GM12878 (cell line): ENCODE measurements at regions of chr14 and their contacts with region 1.

Region 1: DNA sequence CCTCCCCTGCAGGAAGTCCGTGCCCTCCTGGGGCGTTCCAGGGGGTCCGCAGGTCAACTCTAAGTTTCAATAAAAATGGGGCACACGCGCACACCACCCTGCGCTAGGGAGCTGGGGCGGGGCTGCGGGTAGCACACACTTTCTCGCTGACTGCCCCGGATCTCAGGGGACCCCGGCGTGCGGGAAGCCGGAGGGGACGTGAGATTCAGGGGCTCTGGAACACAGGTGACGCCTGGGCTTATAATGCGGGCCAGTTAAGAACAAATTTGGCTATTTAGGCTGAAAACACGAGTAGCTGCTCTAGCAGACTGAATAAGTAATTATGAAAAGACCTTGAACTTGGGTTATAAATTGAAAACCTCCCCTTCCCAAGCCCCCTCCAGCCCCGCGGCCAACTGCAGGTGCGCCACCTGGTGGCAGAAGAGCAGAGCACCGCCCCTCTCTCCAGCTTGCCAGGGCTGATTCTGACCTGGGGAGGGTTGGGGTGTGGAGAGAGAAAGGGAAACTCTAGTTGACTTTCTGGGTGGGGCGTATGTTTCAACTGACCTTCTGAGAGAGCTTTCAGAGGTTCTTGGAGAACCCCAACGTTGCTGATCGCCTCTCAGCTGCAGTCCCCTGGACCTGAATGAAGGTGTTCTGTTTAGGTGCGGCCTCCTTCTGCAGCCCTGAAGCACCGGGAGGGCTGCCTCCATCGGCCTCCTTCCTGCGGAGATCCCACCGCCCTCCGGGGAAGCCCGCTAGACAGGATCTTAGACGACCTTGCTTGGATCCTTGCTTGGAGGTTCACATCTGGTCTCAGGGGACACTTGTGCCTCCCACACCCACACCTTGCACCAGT is 118.4 kb upstream of the EVL start:
- DNase-seq: no peak
- ATAC-seq: peak; percentile 90
- H3K4me3 ChIP-seq: 0 out of 2 replicates have a peak overlapping the region, but pooled peaks have one; percentile 22
- H3K27ac ChIP-seq: no peak overlapping the region
- H3K4me1 ChIP-seq: peaks cover 8% of the 10 kb centered on the region
- H3K27me3 ChIP-seq: peaks cover 0 to 4% of the 10 kb centered on the region in 2 experiments; a peak in 3 of 4 replicates
- CTCF ChIP-seq: peak; percentile 84 to 89 (median 85)
- EP300 ChIP-seq: no peak
- POLR2A ChIP-seq: no peak
- RAD21 ChIP-seq: peak; percentile 60

Region 2: DNA sequence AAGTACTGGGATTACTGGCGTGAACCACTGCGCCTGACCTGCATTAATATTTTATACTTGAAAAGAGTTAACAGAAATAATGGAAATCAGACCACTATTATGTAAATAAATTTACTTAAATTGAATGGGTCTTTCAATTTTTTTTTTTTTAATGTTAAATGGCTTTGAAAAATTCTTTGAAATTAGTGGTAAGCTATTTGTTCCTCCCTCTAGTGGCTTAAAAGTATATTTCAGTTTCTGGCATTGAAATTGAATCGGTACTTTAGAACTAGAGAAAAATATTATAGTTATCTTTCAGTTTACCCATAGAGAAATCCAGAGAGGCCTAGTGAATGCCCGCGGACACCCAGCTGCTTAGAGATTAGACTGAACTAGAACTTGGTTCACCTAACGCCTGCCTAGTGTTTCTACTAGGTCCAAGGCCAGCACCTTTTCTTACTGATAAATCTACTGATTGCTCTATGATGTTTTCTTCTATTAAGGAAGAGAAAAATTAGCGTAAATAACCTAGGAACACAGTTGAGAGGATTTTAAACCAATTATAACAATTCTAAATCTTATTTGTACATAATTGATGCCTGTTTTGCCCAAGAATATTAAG is 47.2 kb before region 1 on chr14:
- CTCF ChIA-PET with region 1: interaction called, 11 read pairs
- POLR2A ChIA-PET with region 1: interaction called, 4 read pairs
- RAD21 ChIA-PET with region 1: interaction called, 3 read pairs
- SMC1A ChIA-PET with region 1: interaction called, 7 read pairs
- in situ Hi-C with region 1: no loop called
- intact Hi-C with region 1: loop called (anchors 5 kb)
- DNase-seq: no peak
- ATAC-seq: peak; percentile 53
- H3K4me3 ChIP-seq: no peak overlapping the region
- H3K27ac ChIP-seq: no peak overlapping the region
- H3K4me1 ChIP-seq: no peaks in the 10 kb centered on the region
- H3K27me3 ChIP-seq: no peaks in the 10 kb centered on the region; a peak in 1 of 4 replicates
- CTCF ChIP-seq: peak in 1 of 3 experiments; percentile 48; a peak in 2 of 6 replicates
- EP300 ChIP-seq: no peak
- POLR2A ChIP-seq: no peak
- RAD21 ChIP-seq: no peak

Region 3: DNA sequence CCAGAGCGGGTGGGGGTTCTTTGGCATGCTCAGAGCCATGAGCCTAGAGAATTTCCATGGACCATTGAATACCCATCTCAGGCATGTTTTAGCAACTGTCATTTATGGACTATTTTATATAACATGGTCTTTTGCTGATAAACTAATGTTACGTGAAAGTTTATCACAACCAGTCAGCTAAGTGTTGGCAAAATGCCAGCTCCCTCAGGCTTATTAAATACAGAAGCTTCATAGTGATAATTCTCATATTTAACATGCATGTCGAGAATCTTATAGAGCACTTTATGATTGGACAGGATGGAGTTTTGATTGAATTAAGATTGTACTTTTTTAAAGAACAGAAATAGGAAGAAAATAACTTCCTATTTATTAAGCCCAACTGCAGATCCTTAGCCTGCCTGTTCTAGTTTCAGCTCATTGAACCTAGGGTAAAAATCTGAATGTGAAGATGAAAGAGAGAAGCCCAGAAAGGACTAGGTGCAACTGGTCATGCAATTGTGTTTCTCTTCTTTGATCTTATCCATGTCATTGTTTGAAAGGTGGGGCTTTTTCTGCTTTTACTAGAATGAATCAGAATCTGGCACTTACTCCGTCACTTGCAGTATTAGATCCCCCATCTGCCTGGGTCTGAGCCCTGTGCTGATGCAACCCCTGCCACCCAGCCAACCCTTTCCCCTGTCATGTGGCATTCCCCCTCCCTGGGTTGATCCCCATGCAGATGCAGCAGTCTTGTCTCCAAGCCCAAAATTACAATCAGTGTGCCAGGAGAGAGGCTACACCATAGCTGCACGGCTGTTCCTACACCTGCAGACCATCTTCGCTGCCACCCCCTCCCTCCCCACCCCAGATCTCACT is 16.2 kb before region 1 on chr14:
- CTCF ChIA-PET with region 1: interaction called, 15 read pairs
- POLR2A ChIA-PET with region 1: no interaction called
- RAD21 ChIA-PET with region 1: interaction called, 5 read pairs
- SMC1A ChIA-PET with region 1: interaction called, 11 read pairs
- in situ Hi-C with region 1: no loop called
- intact Hi-C with region 1: no loop called
- DNase-seq: peak; percentile 82
- ATAC-seq: peak; percentile 96
- H3K4me3 ChIP-seq: no peak overlapping the region
- H3K27ac ChIP-seq: peak overlapping the region; percentile 50
- H3K4me1 ChIP-seq: peaks cover 22% of the 10 kb centered on the region
- H3K27me3 ChIP-seq: no peaks in the 10 kb centered on the region
- CTCF ChIP-seq: no peak
- EP300 ChIP-seq: peak; percentile 80 to 92; a peak in 2 of 4 replicates
- POLR2A ChIP-seq: no peak
- RAD21 ChIP-seq: no peak